Naive thymus-derived CD4-positive, alpha-beta T cell (primary cell): ENCODE measurements at regions of chr12 and their contacts with region 1.

Region 1: GRCh38 chr12:10235761-10236631 is 23.3 kb downstream of the GABARAPL1 start:
- DNase-seq: peak in 7 of 9 donors; percentile 16 to 46 (median 43)
- ATAC-seq: peak; percentile 84
- H3K4me3 ChIP-seq: no peak overlapping the region
- H3K4me3 Mint-ChIP-seq: no peak overlapping the region
- H3K27ac ChIP-seq: no peak overlapping the region
- H3K27ac Mint-ChIP-seq: no peak overlapping the region
- H3K4me1 ChIP-seq: peaks cover 0 to 16% of the 10 kb centered on the region in 2 donors
- H3K4me1 Mint-ChIP-seq: peaks cover 0 to 5% (median 0%) of the 10 kb centered on the region in 7 donors
- H3K27me3 ChIP-seq: no peaks in the 10 kb centered on the region
- H3K27me3 Mint-ChIP-seq: peaks cover 0 to 25% (median 0%) of the 10 kb centered on the region in 5 donors

Region 2: DNA sequence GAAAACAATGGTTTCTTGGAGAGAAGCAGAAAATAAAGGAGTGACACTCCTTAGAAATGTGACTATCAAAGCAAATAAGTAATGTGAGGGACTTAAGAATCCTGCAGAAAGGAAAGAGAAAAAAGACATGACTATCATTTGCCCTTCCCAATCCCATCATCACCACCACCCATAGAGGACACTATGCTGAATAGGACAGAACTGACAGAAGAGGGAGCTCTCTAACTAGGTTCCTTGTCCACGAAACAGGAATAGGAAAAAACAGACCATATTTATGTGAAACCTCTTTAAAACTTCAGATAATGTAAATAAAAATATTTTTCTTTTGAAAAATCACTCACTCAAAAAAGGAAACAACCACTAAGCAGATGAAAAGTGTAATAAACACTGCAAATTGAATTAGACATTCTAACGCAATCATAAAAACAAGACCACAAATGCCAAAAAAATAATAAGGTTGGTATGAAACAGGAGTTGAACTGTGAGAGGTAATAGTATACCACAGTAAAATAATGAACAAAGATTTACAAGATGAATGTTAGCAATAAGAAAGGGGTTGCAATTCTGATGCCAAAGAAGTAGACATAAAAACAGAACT is 95.7 kb after region 1 on chr12:
- CTCF ChIA-PET with region 1: interaction called, 3 read pairs
- POLR2A ChIA-PET with region 1: no interaction called
- intact Hi-C with region 1: loop called (anchors 1 to 5 kb)
- DNase-seq: peak in 7 of 9 donors; percentile 9 to 51 (median 20)
- ATAC-seq: peak; percentile 63
- H3K4me3 ChIP-seq: no peak overlapping the region
- H3K4me3 Mint-ChIP-seq: no peak overlapping the region
- H3K27ac ChIP-seq: no peak overlapping the region
- H3K27ac Mint-ChIP-seq: peak overlapping the region in 1 of 9 donors; percentile 57
- H3K4me1 ChIP-seq: no peaks in the 10 kb centered on the region
- H3K4me1 Mint-ChIP-seq: peaks cover 0 to 6% (median 0%) of the 10 kb centered on the region in 7 donors
- H3K27me3 ChIP-seq: no peaks in the 10 kb centered on the region
- H3K27me3 Mint-ChIP-seq: peaks cover 0 to 6% (median 0%) of the 10 kb centered on the region in 5 donors

Region 3: DNA sequence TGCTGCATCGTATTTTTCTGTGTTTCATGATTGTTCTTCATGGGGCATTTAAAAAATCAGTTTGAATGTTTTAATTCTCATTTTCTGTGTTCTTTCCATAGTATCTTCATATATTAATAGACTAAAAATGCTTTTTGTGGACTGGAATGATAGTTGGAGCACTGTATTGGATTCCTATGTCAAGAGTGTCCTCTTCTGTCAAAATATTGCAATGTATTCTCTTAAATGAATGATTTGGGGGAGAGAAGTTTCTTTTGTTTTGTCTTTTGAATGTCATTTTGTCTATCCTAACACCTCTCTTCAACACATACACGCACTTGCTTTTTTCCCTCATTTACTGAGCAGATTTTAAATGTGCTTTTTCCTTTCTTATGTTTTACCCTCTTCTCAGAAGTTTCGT is 265.0 kb after region 1 on chr12:
- CTCF ChIA-PET with region 1: no interaction called
- POLR2A ChIA-PET with region 1: no interaction called
- intact Hi-C with region 1: loop called in 1 of 2 experiments (anchors 2 kb)
- DNase-seq: no peak
- ATAC-seq: no peak
- H3K4me3 ChIP-seq: no peak overlapping the region
- H3K4me3 Mint-ChIP-seq: no peak overlapping the region
- H3K27ac ChIP-seq: no peak overlapping the region
- H3K27ac Mint-ChIP-seq: no peak overlapping the region
- H3K4me1 ChIP-seq: peaks cover 0 to 12% of the 10 kb centered on the region in 2 donors
- H3K4me1 Mint-ChIP-seq: peaks cover 0 to 4% (median 0%) of the 10 kb centered on the region in 7 donors
- H3K27me3 ChIP-seq: peaks cover 0 to 7% of the 10 kb centered on the region in 2 donors
- H3K27me3 Mint-ChIP-seq: peaks cover 6 to 40% (median 28%) of the 10 kb centered on the region in 5 donors

Region 4: DNA sequence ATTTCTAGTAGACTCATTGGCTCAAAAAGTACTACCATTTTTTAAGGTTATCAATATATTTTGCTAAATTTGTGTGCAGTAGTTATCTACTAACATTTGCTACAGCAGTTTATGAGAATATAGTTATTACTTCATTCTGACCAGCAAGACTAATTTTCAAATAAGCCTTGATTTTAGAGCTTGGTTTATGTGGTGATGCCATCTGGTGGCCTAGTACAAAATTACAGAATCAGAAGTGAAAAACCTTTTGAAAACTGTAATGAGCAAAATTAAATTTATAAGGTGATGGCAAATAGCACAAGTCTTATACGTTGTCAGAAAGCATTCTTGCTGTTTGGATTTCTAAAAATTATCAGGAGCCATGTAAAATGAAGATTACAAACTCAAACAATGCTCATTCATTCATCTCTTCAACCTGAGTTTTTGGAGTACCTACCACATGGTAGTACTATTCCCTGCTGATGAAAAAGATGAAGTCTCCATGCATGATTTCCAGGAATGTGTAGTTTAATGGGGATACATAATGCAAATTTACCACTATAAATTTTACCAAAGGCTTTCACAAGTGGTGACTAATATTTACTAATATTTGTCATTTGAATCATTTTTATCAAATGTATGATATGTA is 326.4 kb after region 1 on chr12:
- CTCF ChIA-PET with region 1: interaction called, 29 read pairs
- POLR2A ChIA-PET with region 1: no interaction called
- intact Hi-C with region 1: loop called (anchors 1 kb)
- DNase-seq: peak in 7 of 9 donors; percentile 5 to 54 (median 40)
- ATAC-seq: peak; percentile 51
- H3K4me3 ChIP-seq: no peak overlapping the region
- H3K4me3 Mint-ChIP-seq: no peak overlapping the region
- H3K27ac ChIP-seq: no peak overlapping the region
- H3K27ac Mint-ChIP-seq: no peak overlapping the region
- H3K4me1 ChIP-seq: peaks cover 0 to 28% of the 10 kb centered on the region in 2 donors
- H3K4me1 Mint-ChIP-seq: peaks cover 0 to 16% (median 10%) of the 10 kb centered on the region in 7 donors
- H3K27me3 ChIP-seq: no peaks in the 10 kb centered on the region
- H3K27me3 Mint-ChIP-seq: peaks cover 7 to 40% (median 16%) of the 10 kb centered on the region in 5 donors

Region 5: DNA sequence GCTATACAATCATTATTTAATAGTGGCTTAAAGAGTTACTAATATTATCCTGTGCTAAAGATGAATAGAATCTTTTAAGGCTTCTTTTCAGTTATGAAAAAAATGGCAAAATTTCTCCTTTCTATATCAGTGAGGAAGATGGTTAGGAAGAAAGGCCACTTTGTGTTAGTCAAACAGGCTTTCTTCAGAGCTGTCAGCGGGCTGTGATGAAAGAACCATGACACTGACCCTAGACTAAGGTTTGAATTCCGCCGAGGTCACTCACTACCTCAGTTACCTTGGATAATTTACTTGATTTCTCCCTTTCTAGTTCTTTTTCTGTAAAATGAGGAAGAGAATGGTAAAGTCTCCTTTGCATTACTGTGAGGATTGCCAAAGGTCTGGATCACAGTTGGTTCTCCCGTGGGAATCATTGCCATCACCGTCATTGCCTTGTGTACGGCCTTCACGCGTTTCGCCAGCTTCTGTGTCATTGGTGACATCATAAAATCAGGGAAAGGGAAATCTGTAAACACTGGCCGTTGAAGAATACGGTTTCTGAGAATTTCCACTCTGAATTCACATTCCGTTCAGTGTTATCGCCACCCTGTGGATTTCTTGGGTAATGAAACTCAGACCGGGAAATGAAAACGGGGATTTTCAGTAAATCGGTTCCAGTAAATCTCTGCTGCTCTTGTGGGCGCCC is 513.8 kb after region 1 on chr12:
- CTCF ChIA-PET with region 1: interaction called, 4 read pairs
- POLR2A ChIA-PET with region 1: no interaction called
- intact Hi-C with region 1: loop called (anchors 1 kb)
- DNase-seq: peak; percentile 22 to 79 (median 67)
- ATAC-seq: peak; percentile 100
- H3K4me3 ChIP-seq: peak overlapping the region; percentile 1
- H3K4me3 Mint-ChIP-seq: peak overlapping the region in 8 of 10 donors; percentile 15 to 76 (median 64)
- H3K27ac ChIP-seq: no peak overlapping the region
- H3K27ac Mint-ChIP-seq: peak overlapping the region in 4 of 9 donors; percentile 7 to 60 (median 34)
- H3K4me1 ChIP-seq: peaks cover 0 to 4% of the 10 kb centered on the region in 2 donors
- H3K4me1 Mint-ChIP-seq: peaks cover 0 to 24% (median 6%) of the 10 kb centered on the region in 7 donors
- H3K27me3 ChIP-seq: peaks cover 0 to 4% of the 10 kb centered on the region in 2 donors
- H3K27me3 Mint-ChIP-seq: peaks cover 32 to 57% (median 33%) of the 10 kb centered on the region in 5 donors

Region 6: GRCh38 chr12:11202811-11203210 is 966.8 kb after region 1 on chr12:
- CTCF ChIA-PET with region 1: no interaction called
- POLR2A ChIA-PET with region 1: no interaction called
- intact Hi-C with region 1: loop called in 1 of 2 experiments (anchors 5 kb)
- DNase-seq: no peak
- ATAC-seq: no peak
- H3K4me3 ChIP-seq: no peak overlapping the region
- H3K4me3 Mint-ChIP-seq: no peak overlapping the region
- H3K27ac ChIP-seq: no peak overlapping the region
- H3K27ac Mint-ChIP-seq: no peak overlapping the region
- H3K4me1 ChIP-seq: no peaks in the 10 kb centered on the region
- H3K4me1 Mint-ChIP-seq: peaks cover 0 to 3% (median 0%) of the 10 kb centered on the region in 7 donors
- H3K27me3 ChIP-seq: no peaks in the 10 kb centered on the region
- H3K27me3 Mint-ChIP-seq: peaks cover 0 to 10% (median 0%) of the 10 kb centered on the region in 5 donors